Activated T-helper 2 cell treated with anti-CD3 and anti-CD28 coated beads, Interferon-gamma antibody, Interleukin-2, Interleukin-4, amounts not matched to agents 10 μg/mL and 5 μg/mL and 100 μg/mL, durations not matched to agents 14 hours and 24 hours and 36 hours (primary cell): ENCODE measurements at regions of chr10 and their contacts with region 1.

Region 1: GRCh38 chr10:89079961-89080360 is 89.4 kb downstream of the FAS start:
- DNase-seq: no peak
- H3K4me3 Mint-ChIP-seq: no peak overlapping the region
- H3K27ac Mint-ChIP-seq: no peak overlapping the region
- H3K4me1 Mint-ChIP-seq: peaks cover 40% of the 10 kb centered on the region
- H3K27me3 Mint-ChIP-seq: no peaks in the 10 kb centered on the region

Region 2: DNA sequence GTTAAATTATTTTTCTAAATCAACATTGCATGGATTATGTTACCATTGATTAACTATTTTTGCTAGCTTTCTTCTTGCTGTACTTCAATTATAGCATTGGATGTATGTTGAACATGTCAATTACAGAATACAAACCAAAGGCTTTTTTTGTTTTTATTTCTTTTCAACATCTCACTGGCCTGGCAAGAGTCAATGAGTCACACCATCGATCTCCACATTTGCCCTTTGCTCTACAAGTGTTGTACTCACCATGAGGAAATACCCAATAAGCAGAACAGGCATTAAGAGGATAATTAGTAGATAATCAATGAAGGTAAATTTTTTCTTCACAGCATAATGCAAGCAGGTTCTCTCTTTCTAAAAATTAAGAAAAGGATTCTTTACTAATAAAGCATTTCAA is 251.7 kb before region 1 on chr10:
- intact Hi-C with region 1: loop called (anchors 5 kb)
- DNase-seq: no peak
- H3K4me3 Mint-ChIP-seq: no peak overlapping the region
- H3K27ac Mint-ChIP-seq: peak overlapping the region; percentile 21
- H3K4me1 Mint-ChIP-seq: peaks cover 72% of the 10 kb centered on the region
- H3K27me3 Mint-ChIP-seq: no peaks in the 10 kb centered on the region

Region 3: DNA sequence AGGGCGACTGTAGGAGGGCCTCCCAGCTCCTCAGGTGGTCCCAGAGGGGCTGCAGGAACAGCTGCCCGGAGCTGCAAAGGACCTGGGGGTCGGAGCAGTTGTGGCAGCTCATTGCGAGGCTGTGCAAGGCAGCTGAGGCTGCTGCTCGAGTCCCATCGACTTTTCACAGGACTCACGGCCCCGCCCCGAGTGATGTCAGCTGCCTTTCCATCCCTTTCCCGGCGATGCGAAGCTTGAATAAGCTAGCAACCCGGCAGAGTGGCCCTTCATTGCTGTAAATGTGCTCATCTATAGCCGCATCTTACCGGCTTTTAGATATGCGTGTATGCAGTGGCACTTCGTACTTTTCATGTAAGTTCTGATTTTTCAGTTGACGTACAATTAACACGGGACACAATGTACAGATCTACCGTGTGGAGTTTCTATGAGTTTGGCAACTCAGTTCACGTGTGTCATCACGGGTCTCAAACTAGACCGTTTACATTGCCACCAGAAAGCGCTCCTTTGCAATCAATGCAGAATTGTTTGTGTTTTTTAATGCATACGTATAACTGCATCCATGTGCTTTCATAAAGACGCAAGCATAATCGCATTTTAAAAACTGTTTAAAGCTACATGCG is 127.3 kb after region 1 on chr10 and contains the start of gene CH25H:
- intact Hi-C with region 1: loop called (anchors 5 kb)
- DNase-seq: peak; percentile 26
- H3K4me3 Mint-ChIP-seq: peak within 1 kb of the TSS; percentile 75
- H3K27ac Mint-ChIP-seq: no peak within 1 kb of the TSS
- H3K4me1 Mint-ChIP-seq: peaks cover 16% of the 10 kb centered on the region
- H3K27me3 Mint-ChIP-seq: peaks cover 48% of the 10 kb centered on the region
- total RNA-seq, gene CH25H: not detected in 2 replicates

Region 4: DNA sequence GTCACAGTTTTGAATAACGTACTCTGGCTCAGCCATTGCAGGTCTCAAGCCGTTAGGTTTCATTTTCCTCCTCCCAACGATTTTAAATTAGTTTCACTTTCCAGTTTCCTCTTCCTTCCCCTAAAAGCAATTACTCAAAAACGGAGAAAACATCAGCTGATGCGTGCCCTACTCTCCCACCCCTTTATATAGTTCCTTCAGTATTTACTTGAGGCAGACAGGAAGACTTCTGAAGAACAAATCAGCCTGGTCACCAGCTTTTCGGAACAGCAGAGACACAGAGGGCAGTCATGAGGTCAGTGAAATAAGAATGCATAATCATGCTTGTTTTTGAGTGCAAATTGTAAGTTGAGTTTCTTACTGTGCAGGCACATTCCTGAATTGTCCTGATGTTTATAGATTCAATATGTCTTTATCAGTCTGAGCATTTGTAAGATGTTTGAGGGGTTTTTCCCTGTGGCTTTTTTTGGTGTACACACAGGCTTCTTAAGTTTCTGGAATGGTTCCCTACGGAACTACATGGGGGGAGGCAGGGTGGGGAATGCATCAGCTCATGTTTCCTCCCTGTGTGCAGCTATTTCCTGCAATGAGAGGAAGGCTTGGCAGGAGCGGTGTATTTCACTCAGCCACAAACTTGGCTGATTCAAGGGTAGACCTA is 248.0 kb after region 1 on chr10 and contains the start of gene IFIT3:
- intact Hi-C with region 1: no loop called
- DNase-seq: no peak
- H3K4me3 Mint-ChIP-seq: peak within 1 kb of the TSS; percentile 81
- H3K27ac Mint-ChIP-seq: peak within 1 kb of the TSS; percentile 19
- H3K4me1 Mint-ChIP-seq: peaks cover 38% of the 10 kb centered on the region
- H3K27me3 Mint-ChIP-seq: peaks cover 44% of the 10 kb centered on the region
- total RNA-seq, gene IFIT3: 0.74 and 0.94 TPM in 2 replicates

Region 5: GRCh38 chr10:89633484-89633883 is 553.5 kb after region 1 on chr10:
- intact Hi-C with region 1: no loop called
- DNase-seq: no peak
- H3K4me3 Mint-ChIP-seq: no peak overlapping the region
- H3K27ac Mint-ChIP-seq: no peak overlapping the region
- H3K4me1 Mint-ChIP-seq: peaks cover 4% of the 10 kb centered on the region
- H3K27me3 Mint-ChIP-seq: no peaks in the 10 kb centered on the region